HCT116 (cell line): ENCODE measurements at regions of chr16 and their contacts with region 1.

Region 1: DNA sequence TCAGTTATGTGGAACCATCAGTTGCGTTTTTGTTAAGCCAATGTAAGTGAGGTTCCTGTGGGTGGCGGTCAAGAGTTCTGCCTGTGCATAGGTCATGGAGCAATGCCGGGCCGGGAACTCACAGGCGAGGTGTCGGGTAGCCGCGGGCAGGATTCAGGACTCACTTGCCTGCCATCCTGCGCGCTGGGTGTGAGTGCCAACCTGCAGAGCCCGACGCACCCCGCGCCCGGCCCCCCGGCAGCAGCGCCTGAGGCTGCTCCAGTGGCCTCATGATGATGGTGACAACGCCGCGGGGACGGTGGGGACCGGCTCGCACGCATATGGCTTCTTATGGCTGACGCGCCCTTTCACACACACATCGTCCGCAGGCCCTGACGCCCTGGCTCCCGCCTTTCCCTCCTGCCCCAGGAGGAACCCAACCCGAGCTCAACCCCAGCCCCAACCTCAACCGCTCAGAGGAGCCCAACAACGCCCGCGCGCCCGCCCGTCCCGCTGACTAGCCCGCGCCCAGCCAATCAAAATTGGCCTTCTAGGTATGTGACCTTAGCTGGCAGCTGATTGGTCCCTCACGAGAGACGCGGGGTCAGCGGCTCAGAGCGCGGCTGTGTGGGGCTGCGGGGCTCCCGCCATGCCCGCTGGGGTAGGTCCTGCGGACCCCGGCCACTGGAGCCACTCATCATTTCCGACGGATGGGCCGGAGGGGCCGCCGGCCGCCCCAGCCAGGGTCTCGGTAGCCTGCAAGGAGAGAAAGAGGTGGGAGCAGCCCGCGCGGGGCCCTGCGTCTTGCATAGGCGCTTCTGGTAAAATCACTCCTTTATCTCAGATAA is at the start of gene C16orf95:
- DNase-seq: peak; percentile 92
- ATAC-seq: peak; percentile 88
- H3K4me3 ChIP-seq: peak within 1 kb of the TSS; percentile 73 to 99
- H3K27ac ChIP-seq: peak within 1 kb of the TSS; percentile 87
- H3K4me1 ChIP-seq: peaks cover 11 to 23% of the 10 kb centered on the region in 2 experiments; a peak in 3 of 4 replicates
- H3K27me3 ChIP-seq: no peaks in the 10 kb centered on the region
- CTCF ChIP-seq: peak in 2 of 3 experiments; percentile 75 to 78; a peak in 4 of 6 replicates
- POLR2A ChIP-seq: peak; percentile 92
- RAD21 ChIP-seq: no peak
- total RNA-seq, gene C16orf95: 12.2 TPM

Region 2: DNA sequence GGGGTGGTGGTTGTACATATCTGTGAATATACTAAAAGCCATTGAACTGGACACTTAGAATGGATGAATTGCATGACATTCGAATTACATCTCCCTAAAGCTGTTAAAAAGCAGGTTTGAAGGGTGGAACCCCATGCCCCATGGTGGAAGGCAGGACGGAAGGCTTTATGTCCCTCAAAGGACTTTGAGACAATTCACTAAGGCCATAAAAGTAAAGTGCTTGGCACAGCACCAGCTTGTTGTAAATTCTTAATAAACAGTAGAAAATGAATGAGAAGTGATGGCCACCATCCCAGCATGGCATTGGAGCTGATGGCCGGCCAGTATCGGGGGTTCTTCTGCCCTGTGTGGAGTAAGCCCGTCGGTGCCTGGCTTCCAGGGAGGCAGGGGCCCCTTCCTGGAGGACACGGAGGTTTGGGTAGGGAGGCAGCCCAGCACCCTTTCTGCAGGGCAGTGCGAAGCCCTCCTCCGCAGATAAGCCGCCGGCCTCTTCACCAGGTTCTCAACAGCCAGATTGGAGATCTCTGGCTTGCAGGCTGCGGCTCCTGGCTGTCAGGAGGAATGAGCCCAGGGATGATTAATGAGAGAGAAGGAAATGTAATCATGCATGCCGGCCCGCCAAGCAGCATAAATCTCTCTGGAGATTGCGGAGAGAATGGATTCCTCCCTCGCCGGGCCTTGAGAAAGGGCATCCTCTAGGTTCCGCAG is 391.9 kb before region 1 on chr16:
- CTCF ChIA-PET with region 1: no interaction called
- POLR2A ChIA-PET with region 1: no interaction called
- RAD21 ChIA-PET with region 1: no interaction called
- intact Hi-C with region 1: no loop called
- DNase-seq: no peak
- ATAC-seq: no peak; the same call in 1 of the 2 replicates
- H3K4me3 ChIP-seq: no peak overlapping the region
- H3K27ac ChIP-seq: no peak overlapping the region
- H3K4me1 ChIP-seq: no peaks in the 10 kb centered on the region
- H3K27me3 ChIP-seq: peaks cover 39% of the 10 kb centered on the region
- CTCF ChIP-seq: no peak
- POLR2A ChIP-seq: no peak
- RAD21 ChIP-seq: no peak

Region 3: GRCh38 chr16:87252269-87252970 is 64.7 kb before region 1 on chr16:
- CTCF ChIA-PET with region 1: no interaction called
- POLR2A ChIA-PET with region 1: no interaction called
- RAD21 ChIA-PET with region 1: no interaction called
- intact Hi-C with region 1: no loop called
- DNase-seq: no peak
- ATAC-seq: no peak
- H3K4me3 ChIP-seq: no peak overlapping the region
- H3K27ac ChIP-seq: no peak overlapping the region
- H3K4me1 ChIP-seq: no peaks in the 10 kb centered on the region
- H3K27me3 ChIP-seq: no peaks in the 10 kb centered on the region
- CTCF ChIP-seq: no peak
- POLR2A ChIP-seq: no peak
- RAD21 ChIP-seq: no peak

Region 4: GRCh38 chr16:87369796-87370719 is 52.9 kb after region 1 on chr16:
- CTCF ChIA-PET with region 1: no interaction called
- POLR2A ChIA-PET with region 1: no interaction called
- RAD21 ChIA-PET with region 1: no interaction called
- intact Hi-C with region 1: no loop called
- DNase-seq: no peak
- ATAC-seq: no peak; the same call in 1 of the 2 replicates
- H3K4me3 ChIP-seq: no peak overlapping the region
- H3K27ac ChIP-seq: no peak overlapping the region; the same call in 1 of the 2 replicates
- H3K4me1 ChIP-seq: peaks cover 0 to 7% of the 10 kb centered on the region in 2 experiments; a peak in 2 of 4 replicates
- H3K27me3 ChIP-seq: no peaks in the 10 kb centered on the region
- CTCF ChIP-seq: no peak
- POLR2A ChIP-seq: no peak
- RAD21 ChIP-seq: no peak

Region 5: GRCh38 chr16:87387942-87388817 is 71.0 kb after region 1 on chr16:
- CTCF ChIA-PET with region 1: interaction called, 3 read pairs
- POLR2A ChIA-PET with region 1: interaction called, 8 read pairs
- RAD21 ChIA-PET with region 1: no interaction called
- intact Hi-C with region 1: loop called (anchors 5 kb)
- DNase-seq: peak; percentile 100
- ATAC-seq: peak; percentile 67
- H3K4me3 ChIP-seq: no peak overlapping the region; a peak in 1 of 4 replicates
- H3K27ac ChIP-seq: peak overlapping the region; percentile 47
- H3K4me1 ChIP-seq: peaks cover 37 to 52% of the 10 kb centered on the region in 2 experiments
- H3K27me3 ChIP-seq: no peaks in the 10 kb centered on the region
- CTCF ChIP-seq: no peak
- POLR2A ChIP-seq: no peak
- RAD21 ChIP-seq: no peak

Region 6: DNA sequence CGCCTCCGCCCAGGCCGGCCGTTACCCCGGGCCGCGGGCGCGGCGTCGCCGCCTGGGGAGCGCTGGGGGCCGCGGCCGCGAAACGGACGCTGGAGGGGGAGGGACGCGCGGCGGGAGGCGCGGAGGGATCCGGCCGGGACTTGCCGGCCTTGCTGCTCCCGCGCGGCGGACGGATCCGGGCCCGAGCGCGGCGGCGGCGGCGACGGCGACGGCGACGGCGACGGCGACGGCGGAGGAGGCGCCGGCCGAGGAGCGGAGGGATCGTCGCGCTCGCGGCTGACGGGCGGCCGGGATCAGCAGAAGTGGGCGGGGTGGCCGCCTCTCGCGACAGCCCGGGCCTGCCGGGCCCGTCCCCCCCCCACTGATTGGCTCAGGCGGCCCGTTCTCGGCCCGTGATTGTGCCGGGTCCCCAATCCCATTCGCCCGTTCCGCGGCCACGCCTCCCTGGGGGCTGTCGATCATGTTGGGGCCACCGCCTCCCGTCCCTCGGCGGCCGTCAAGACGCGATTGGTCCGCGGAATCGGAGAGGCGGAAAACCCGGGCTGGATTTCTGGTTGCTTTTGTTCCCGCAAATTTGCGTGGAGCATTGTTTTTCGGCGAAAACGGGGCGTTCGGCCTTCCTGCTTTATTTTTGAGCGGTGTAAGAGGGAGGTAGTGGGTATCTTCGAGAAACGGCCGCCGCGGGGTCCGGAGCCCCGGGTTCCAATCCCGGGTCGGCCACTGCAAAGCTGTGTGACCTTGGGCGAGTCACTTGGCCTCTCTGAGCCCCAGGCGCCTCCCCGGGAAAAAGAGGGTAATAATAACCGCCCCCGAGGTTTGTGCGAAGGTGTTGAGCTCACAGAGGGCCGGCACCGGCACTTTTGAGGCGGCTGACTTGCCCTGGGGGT is 175.8 kb after region 1 on chr16 and contains the start of gene ZCCHC14:
- CTCF ChIA-PET with region 1: no interaction called
- POLR2A ChIA-PET with region 1: no interaction called
- RAD21 ChIA-PET with region 1: no interaction called
- intact Hi-C with region 1: no loop called
- DNase-seq: peak; percentile 98
- ATAC-seq: peak; percentile 98
- H3K4me3 ChIP-seq: peak within 1 kb of the TSS; percentile 54 to 64
- H3K27ac ChIP-seq: peak within 1 kb of the TSS; percentile 77; the same call in 1 of the 2 replicates
- H3K4me1 ChIP-seq: peaks cover 8 to 30% of the 10 kb centered on the region in 2 experiments; a peak in 3 of 4 replicates
- H3K27me3 ChIP-seq: no peaks in the 10 kb centered on the region
- CTCF ChIP-seq: no peak
- POLR2A ChIP-seq: peak; percentile 35
- RAD21 ChIP-seq: no peak
- total RNA-seq, gene ZCCHC14: 37.8 TPM